A673 (cell line): ENCODE measurements at regions of chr2 and their contacts with region 1.

Region 1: DNA sequence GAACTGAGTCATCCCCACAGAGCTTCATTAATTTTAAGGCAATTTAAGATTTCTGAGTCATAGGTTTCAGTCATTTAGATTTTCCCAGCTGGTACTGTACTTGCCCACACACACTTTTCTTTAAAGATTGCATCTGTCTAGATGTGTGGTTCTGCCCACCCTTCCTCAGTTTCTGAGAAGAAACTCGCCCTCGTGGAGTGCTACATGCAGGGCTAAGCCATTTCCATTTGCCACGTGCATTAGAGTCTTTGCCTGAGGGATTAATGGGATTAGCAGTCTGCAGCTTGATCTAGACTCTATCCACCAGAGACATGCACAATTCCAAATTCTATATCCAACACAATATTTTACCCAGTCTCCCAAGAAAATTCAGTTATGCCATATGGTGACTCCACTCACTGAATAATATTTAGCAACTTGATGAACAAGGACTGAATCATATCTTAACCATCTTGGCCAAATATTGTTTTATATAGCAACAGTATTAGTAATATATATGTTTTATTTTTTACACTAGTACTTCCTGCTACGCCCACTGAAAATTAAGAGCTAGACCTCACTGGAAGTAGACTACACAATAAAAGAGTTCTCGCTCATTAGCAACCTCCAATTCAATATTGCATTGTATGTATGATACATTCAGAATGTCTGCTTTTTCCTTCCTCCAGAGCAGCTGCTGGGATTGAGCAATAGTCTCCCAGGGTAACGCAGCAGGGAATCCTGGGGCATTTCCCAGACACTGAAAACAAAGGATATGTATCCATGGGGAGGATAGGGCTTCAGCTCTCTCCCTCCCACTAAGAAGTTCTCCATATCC is 14.2 kb upstream of the TRIB2 start:
- DNase-seq: peak; percentile 95
- H3K4me3 ChIP-seq: no peak overlapping the region
- H3K27ac ChIP-seq: peak overlapping the region; percentile 67
- H3K4me1 ChIP-seq: peaks cover 40% of the 10 kb centered on the region
- H3K27me3 ChIP-seq: no peaks in the 10 kb centered on the region
- CTCF ChIP-seq: no peak

Region 2: GRCh38 chr2:12257476-12257875 is 445.0 kb before region 1 on chr2:
- CTCF ChIA-PET with region 1: no interaction called
- POLR2A ChIA-PET with region 1: no interaction called
- intact Hi-C with region 1: no loop called
- DNase-seq: no peak
- H3K4me3 ChIP-seq: no peak overlapping the region
- H3K27ac ChIP-seq: no peak overlapping the region
- H3K4me1 ChIP-seq: peaks cover 8% of the 10 kb centered on the region
- H3K27me3 ChIP-seq: no peaks in the 10 kb centered on the region
- CTCF ChIP-seq: no peak

Region 3: GRCh38 chr2:12282780-12283695 is 419.5 kb before region 1 on chr2:
- CTCF ChIA-PET with region 1: no interaction called
- POLR2A ChIA-PET with region 1: no interaction called
- intact Hi-C with region 1: loop called (anchors 10 kb)
- DNase-seq: peak; percentile 39
- H3K4me3 ChIP-seq: no peak overlapping the region
- H3K27ac ChIP-seq: no peak overlapping the region
- H3K4me1 ChIP-seq: peaks cover 31% of the 10 kb centered on the region
- H3K27me3 ChIP-seq: no peaks in the 10 kb centered on the region
- CTCF ChIP-seq: no peak

Region 4: GRCh38 chr2:12555012-12555645 is 147.4 kb before region 1 on chr2:
- CTCF ChIA-PET with region 1: no interaction called
- POLR2A ChIA-PET with region 1: no interaction called
- intact Hi-C with region 1: loop called (anchors 5 kb)
- DNase-seq: peak; percentile 94
- H3K4me3 ChIP-seq: no peak overlapping the region
- H3K27ac ChIP-seq: peak overlapping the region; percentile 75
- H3K4me1 ChIP-seq: peaks cover 28% of the 10 kb centered on the region
- H3K27me3 ChIP-seq: no peaks in the 10 kb centered on the region
- CTCF ChIP-seq: peak; percentile 32; the same call in 1 of the 2 replicates